A673 (cell line): ENCODE measurements at regions of chr12 and their contacts with region 1.

Region 1: GRCh38 chr12:85155787-85156186 is 119.6 kb downstream of the LRRIQ1 start:
- DNase-seq: peak; percentile 81
- H3K4me3 ChIP-seq: no peak overlapping the region
- H3K27ac ChIP-seq: peak overlapping the region; percentile 40
- H3K4me1 ChIP-seq: peaks cover 24% of the 10 kb centered on the region
- H3K27me3 ChIP-seq: no peaks in the 10 kb centered on the region
- CTCF ChIP-seq: peak; percentile 70

Region 2: DNA sequence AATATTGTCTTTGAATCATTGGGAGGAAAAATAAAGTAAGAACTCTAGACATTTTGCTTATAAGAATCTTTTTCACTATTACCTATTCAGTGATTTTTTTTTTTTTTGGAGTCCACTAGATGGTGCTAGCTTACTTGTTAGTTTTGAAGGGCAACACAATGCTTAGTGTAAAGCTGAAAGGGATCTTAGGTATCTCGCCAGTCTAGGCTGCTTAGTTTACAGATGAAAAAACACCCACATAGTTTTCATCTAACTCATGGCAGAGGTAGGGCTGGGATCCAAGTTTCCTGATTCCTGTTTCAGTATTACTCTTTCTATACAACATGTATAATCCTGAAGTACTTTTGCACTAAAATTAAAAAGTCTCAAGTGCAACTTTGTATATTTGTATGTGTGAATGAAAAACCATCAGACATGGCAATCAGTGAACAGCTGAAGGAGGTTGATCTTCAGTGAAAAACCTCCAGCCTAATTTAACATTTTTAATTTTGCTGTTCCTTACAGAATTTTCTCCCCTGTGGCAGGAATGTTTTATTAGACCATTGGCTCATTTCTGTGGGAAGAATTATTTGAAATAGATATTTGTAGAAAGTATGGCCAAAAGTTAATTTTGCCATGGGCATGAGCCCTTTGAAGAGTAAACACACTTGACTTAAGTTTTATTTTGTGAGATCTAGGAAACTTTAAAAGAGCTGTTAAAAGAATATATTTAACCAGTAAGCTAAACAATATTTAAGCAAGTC is 78.9 kb before region 1 on chr12:
- CTCF ChIA-PET with region 1: no interaction called
- POLR2A ChIA-PET with region 1: no interaction called
- intact Hi-C with region 1: loop called (anchors 5 kb)
- DNase-seq: peak; percentile 80
- H3K4me3 ChIP-seq: no peak overlapping the region
- H3K27ac ChIP-seq: no peak overlapping the region
- H3K4me1 ChIP-seq: no peaks in the 10 kb centered on the region
- H3K27me3 ChIP-seq: no peaks in the 10 kb centered on the region
- CTCF ChIP-seq: peak; percentile 68

Region 3: DNA sequence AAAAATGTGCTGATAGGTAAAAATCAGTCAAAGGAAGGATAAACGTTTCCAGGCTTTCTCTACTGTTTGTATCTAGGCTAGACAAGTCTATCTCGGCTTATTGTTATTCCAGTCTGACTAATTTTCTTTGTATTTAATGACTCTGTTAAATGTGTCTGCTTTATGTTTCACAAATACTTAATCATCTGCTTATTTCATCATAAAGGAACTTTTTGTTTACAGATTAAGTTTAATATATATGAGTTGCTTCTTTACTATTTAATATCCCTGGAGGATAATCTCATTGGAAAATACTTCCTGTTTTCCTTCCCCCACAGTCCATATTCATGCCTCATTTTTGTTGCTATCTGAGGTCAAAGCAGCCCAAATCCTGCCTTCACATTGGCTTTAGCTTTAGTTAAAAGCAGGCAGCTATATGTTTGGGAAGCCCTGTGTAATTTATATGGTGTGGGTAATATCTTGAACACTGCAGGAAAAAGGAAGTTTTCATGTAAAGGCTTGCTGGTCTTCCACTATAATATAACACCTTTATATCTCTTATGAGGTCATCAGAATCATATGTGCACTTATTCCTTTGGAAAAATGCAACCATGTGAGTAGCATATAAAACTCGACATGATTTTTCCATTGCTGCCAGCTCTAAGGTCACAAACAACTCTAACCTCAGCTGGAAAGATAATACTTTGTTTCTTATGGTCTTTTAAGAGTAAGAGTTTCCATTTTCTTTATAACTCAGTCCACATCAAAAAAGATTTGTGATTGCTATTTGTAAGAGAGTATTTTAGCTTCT is 201.0 kb after region 1 on chr12:
- CTCF ChIA-PET with region 1: no interaction called
- POLR2A ChIA-PET with region 1: no interaction called
- intact Hi-C with region 1: loop called (anchors 1 kb)
- DNase-seq: peak; percentile 89
- H3K4me3 ChIP-seq: no peak overlapping the region
- H3K27ac ChIP-seq: peak overlapping the region; percentile 81
- H3K4me1 ChIP-seq: peaks cover 74% of the 10 kb centered on the region
- H3K27me3 ChIP-seq: no peaks in the 10 kb centered on the region
- CTCF ChIP-seq: no peak

Region 4: GRCh38 chr12:85550924-85551323 is 395.1 kb after region 1 on chr12:
- CTCF ChIA-PET with region 1: no interaction called
- POLR2A ChIA-PET with region 1: no interaction called
- intact Hi-C with region 1: no loop called
- DNase-seq: no peak
- H3K4me3 ChIP-seq: no peak overlapping the region
- H3K27ac ChIP-seq: no peak overlapping the region
- H3K4me1 ChIP-seq: no peaks in the 10 kb centered on the region
- H3K27me3 ChIP-seq: no peaks in the 10 kb centered on the region
- CTCF ChIP-seq: no peak

Region 5: GRCh38 chr12:85575120-85576096 is 419.6 kb after region 1 on chr12:
- CTCF ChIA-PET with region 1: no interaction called
- POLR2A ChIA-PET with region 1: no interaction called
- intact Hi-C with region 1: loop called (anchors 10 kb)
- DNase-seq: peak; percentile 86
- H3K4me3 ChIP-seq: no peak overlapping the region
- H3K27ac ChIP-seq: no peak overlapping the region
- H3K4me1 ChIP-seq: peaks cover 2% of the 10 kb centered on the region
- H3K27me3 ChIP-seq: no peaks in the 10 kb centered on the region
- CTCF ChIP-seq: peak; percentile 83

Region 6: GRCh38 chr12:85920324-85920947 is 764.6 kb after region 1 on chr12:
- CTCF ChIA-PET with region 1: no interaction called
- POLR2A ChIA-PET with region 1: no interaction called
- intact Hi-C with region 1: loop called (anchors 2 kb)
- DNase-seq: peak; percentile 69
- H3K4me3 ChIP-seq: no peak overlapping the region
- H3K27ac ChIP-seq: no peak overlapping the region
- H3K4me1 ChIP-seq: peaks cover 3% of the 10 kb centered on the region
- H3K27me3 ChIP-seq: no peaks in the 10 kb centered on the region
- CTCF ChIP-seq: peak; percentile 69